HEK293 (cell line): ENCODE measurements at regions of chr21 and their contacts with region 1.

Region 1: GRCh38 chr21:37463083-37463801 is 96.7 kb downstream of the DYRK1A start:
- H3K4me3 ChIP-seq: no peak overlapping the region
- H3K27ac ChIP-seq: no peak overlapping the region
- H3K4me1 ChIP-seq: peaks cover 20% of the 10 kb centered on the region
- CTCF ChIP-seq: peak; percentile 41; the same call in 1 of the 2 replicates

Region 2: GRCh38 chr21:37407719-37408420 is 55.4 kb before region 1 on chr21:
- CTCF ChIA-PET with region 1: interaction called, 12 read pairs
- POLR2A ChIA-PET with region 1: no interaction called
- H3K4me3 ChIP-seq: no peak overlapping the region
- H3K27ac ChIP-seq: no peak overlapping the region
- H3K4me1 ChIP-seq: peaks cover 12% of the 10 kb centered on the region
- CTCF ChIP-seq: no peak

Region 3: GRCh38 chr21:37452227-37452626 is 11.0 kb before region 1 on chr21:
- CTCF ChIA-PET with region 1: interaction called, 24 read pairs
- POLR2A ChIA-PET with region 1: no interaction called
- H3K4me3 ChIP-seq: no peak overlapping the region
- H3K27ac ChIP-seq: no peak overlapping the region
- H3K4me1 ChIP-seq: peaks cover 32% of the 10 kb centered on the region
- CTCF ChIP-seq: no peak

Region 4: DNA sequence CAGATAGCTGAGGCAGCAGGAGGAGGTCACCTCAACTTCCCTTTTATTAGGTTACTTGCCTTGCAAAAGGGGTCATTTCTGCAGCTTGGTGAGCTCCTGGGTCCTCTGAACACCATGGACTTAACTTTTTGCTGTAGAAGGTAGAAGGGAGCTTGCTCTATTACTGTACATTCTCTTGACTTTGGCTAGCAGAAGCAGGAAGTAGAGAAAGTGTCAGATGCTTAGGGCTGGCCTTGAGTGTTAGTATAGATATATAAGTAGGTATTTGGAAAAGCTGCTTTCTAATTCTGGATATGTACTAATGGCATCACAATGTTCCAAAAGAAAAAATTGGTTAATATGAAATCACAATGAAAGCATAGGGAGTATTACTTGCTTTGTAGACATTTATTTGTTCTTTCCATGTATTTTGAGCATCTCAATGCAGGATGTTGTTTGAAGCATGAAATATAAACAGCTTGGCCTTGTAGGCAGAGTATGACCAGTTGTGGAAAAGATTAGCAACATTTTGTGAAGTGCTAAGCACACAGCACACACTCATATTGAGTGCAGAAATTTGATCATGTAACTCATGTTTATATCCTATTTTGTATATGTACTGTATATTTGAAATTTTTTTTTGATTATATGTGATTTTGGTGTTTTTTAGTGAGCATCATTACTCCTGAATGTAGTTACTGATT is 12.1 kb after region 1 on chr21:
- CTCF ChIA-PET with region 1: interaction called, 40 read pairs
- POLR2A ChIA-PET with region 1: no interaction called
- H3K4me3 ChIP-seq: no peak overlapping the region
- H3K27ac ChIP-seq: no peak overlapping the region
- H3K4me1 ChIP-seq: no peaks in the 10 kb centered on the region
- CTCF ChIP-seq: no peak